ENCODE measurements at regions of chr6 and their contacts with region 1.

Region 1: DNA sequence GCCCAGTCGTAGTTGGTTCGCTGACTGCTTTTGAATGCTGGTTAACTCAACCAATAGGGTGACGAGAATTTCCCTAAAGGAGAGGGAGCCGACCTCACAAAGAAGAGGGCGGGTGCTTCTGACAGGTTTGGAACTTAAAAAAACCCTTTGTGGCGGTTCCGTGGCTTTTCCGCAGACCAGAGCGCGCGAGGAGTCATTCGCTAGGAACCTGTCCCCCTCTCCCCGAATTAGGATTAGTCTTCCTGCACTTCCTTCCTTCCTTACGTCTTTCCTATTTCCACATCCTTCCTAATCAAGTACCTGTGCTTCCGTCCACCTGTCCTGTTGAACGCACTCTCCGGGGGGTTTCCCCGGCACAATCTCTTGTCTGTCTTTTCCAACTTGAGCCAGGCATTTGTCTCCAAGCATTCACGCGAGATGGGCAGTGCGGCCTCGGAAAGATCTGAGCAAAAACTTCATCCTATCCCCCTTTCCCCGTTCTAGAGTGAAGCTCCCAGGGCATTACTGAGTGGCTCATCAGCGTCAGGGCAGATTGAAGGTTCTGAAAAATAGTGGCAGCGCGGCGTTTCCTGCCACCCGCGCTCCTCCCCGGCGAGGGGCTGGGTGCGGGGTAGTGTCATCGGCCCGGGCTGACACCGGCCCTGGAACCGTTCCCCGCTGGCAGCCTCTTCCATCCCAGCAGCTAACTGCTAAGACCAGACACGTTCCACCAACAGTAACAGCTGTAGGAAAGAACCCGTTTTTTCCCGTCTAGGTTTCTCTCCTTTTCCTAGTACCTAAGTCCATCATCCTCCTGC is 1.5 kb upstream of the STXBP5 start:
- DNase-seq: peak; percentile 92
- ATAC-seq: peak; percentile 91
- H3K4me3 ChIP-seq: peak overlapping the region; percentile 76
- H3K27ac ChIP-seq: peak overlapping the region; percentile 85
- H3K4me1 ChIP-seq: no peaks in the 10 kb centered on the region
- H3K27me3 ChIP-seq: no peaks in the 10 kb centered on the region
- CTCF ChIP-seq: no peak
- EP300 ChIP-seq: no peak
- POLR2A ChIP-seq: peak; percentile 79
- RAD21 ChIP-seq: no peak

Region 2: DNA sequence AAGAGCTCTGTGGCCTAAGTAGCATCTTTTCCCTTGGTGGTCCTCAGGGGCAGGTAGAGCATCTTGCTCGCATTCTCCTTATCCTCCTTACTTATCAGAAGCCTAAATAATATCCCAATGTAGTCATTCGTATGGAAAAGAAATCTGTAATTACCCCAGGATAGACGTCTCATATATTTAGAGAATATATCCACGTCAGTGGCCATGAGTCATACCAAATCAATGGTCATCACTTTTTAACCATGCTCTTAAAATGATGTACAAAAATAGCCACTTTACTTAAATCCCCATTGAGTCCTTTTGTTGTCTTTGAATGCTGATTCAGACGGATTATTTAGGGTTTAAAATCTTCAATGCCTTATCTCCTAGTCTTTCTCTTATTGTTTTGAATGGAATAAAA is 230.2 kb before region 1 on chr6:
- CTCF ChIA-PET with region 1: no interaction called
- POLR2A ChIA-PET with region 1: no interaction called
- RAD21 ChIA-PET with region 1: no interaction called
- SMC1A ChIA-PET with region 1: no interaction called
- in situ Hi-C with region 1: no loop called
- intact Hi-C with region 1: no loop called
- DNase-seq: no peak
- ATAC-seq: no peak
- H3K4me3 ChIP-seq: no peak overlapping the region
- H3K27ac ChIP-seq: no peak overlapping the region
- H3K4me1 ChIP-seq: no peaks in the 10 kb centered on the region
- H3K27me3 ChIP-seq: no peaks in the 10 kb centered on the region
- CTCF ChIP-seq: no peak
- EP300 ChIP-seq: no peak
- POLR2A ChIP-seq: no peak
- RAD21 ChIP-seq: no peak

Region 3: GRCh38 chr6:147382945-147383554 is 180.3 kb after region 1 on chr6:
- CTCF ChIA-PET with region 1: interaction called, 3 read pairs
- POLR2A ChIA-PET with region 1: no interaction called
- RAD21 ChIA-PET with region 1: no interaction called
- SMC1A ChIA-PET with region 1: no interaction called
- in situ Hi-C with region 1: no loop called
- intact Hi-C with region 1: loop called (anchors 10 kb)
- DNase-seq: no peak
- ATAC-seq: 0 out of 3 replicates have a peak, but pooled peaks have one; percentile 9
- H3K4me3 ChIP-seq: no peak overlapping the region
- H3K27ac ChIP-seq: no peak overlapping the region
- H3K4me1 ChIP-seq: peaks cover 3% of the 10 kb centered on the region; the same call in 1 of the 2 replicates
- H3K27me3 ChIP-seq: no peaks in the 10 kb centered on the region
- CTCF ChIP-seq: peak; percentile 10 to 27 (median 16); a peak in 3 of 6 replicates
- EP300 ChIP-seq: no peak
- POLR2A ChIP-seq: no peak
- RAD21 ChIP-seq: no peak

Measured in GM12878 (cell line).